OCI-LY7 (cell line): ENCODE measurements at regions of chr14 and their contacts with region 1.

Region 1: DNA sequence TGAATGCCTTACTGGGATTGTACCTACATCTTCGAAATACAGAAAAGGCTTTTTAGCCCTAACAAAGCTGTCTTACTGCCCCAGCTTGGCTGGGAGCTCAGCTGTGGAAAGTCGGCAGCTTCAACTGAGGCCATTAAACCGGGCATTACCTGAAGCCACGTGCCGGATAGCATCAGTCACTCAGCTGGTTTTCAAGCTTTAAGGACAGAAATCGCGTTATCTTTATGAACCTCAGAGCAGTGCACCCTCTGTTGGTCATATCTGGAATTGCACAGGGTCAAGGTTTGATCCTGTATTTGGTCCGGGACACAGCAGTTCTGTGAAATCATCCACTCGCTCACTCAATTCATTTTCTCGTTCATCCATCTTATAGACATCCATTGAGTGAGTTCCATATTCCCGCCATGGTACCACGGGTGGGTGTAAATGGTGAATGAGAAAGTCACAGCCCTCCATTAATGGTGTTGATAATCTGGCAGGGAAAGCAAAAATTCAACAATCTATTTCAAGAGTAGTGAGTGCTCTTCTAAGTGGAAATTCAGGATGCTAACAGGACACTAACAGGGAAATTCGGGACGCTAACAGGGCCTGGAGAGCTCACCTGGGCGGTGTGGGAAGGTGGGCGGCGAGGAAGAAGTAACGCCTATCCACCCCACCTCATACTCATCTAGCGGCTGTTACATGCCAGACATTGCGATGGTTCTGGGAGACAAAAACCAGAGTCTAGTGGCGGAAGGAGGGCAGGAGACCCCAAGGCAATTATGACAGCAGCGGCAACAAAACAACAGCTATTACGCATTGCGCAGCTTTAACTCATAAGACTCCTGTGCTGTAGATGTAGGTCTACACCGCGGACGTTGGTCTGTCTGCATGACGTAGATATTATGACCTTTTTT is 60.6 kb upstream of the TCL1A start:
- DNase-seq: peak; percentile 86
- H3K4me3 ChIP-seq: no peak overlapping the region
- H3K27ac ChIP-seq: no peak overlapping the region
- H3K4me1 ChIP-seq: peaks cover 6% of the 10 kb centered on the region
- CTCF ChIP-seq: peak; percentile 98

Region 2: DNA sequence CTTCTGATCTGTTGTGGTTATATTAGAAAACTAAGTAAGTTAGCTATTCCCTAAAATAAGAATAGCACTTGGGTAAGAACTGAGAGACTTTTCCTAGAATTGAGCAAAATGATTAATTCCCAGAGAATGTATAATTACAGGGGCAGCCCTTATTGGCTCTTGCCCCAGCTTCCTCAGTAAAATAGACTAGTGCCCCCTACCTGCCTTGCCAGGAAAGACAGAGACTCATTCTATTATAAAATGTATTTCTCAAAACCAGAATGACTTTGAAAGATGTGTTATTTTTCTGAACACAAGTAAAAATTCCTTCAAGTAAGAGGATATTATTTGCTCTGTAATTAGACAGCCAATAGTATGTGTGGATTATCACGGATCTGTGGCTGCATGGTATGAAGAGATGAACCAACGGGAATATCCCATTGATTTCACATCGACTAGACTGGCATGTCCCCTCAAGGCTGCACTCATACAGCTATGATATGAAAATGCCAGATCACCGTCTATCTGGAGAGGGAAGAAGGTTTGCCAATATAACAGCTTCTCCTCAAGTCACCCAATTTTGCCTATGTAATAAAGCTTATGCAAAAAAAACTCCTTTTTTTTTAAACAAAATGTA is 247.0 kb before region 1 on chr14:
- CTCF ChIA-PET with region 1: no interaction called
- POLR2A ChIA-PET with region 1: no interaction called
- intact Hi-C with region 1: no loop called
- DNase-seq: peak; percentile 66
- H3K4me3 ChIP-seq: no peak overlapping the region
- H3K27ac ChIP-seq: no peak overlapping the region
- H3K4me1 ChIP-seq: peaks cover 45% of the 10 kb centered on the region
- CTCF ChIP-seq: peak; percentile 98

Region 3: DNA sequence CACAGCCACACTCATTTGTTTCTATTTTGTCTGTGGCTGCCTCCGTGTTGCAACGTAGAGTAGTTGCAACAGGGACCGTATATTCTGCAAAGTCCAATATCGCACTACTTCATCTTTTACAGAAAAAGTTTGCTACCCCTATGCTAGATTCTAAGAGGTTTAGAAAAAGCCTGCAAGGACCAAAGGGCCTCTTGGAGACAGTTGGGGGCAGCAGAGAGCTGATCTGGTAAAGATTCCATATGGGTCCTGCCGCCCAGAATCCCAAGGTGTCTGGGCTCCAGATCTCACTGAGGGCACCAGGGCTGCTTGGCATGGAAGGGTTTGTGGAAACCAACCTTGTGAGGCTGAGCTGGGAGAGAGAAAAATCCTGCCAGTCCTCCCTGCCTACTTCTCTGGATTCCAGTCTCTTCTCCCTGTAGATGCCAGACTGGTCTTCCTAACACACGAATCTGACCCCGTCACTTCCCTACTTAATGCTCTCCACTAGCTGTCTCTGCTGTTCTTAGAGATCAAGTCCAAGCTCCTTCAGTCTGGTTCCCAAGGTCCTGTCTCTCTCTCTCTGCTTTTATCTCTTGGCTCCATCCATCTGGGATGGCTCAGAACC is 165.0 kb before region 1 on chr14:
- CTCF ChIA-PET with region 1: interaction called, 5 read pairs
- POLR2A ChIA-PET with region 1: no interaction called
- intact Hi-C with region 1: loop called (anchors 1 kb)
- DNase-seq: peak; percentile 81
- H3K4me3 ChIP-seq: no peak overlapping the region
- H3K27ac ChIP-seq: no peak overlapping the region
- H3K4me1 ChIP-seq: peaks cover 26% of the 10 kb centered on the region
- CTCF ChIP-seq: peak; percentile 97

Region 4: DNA sequence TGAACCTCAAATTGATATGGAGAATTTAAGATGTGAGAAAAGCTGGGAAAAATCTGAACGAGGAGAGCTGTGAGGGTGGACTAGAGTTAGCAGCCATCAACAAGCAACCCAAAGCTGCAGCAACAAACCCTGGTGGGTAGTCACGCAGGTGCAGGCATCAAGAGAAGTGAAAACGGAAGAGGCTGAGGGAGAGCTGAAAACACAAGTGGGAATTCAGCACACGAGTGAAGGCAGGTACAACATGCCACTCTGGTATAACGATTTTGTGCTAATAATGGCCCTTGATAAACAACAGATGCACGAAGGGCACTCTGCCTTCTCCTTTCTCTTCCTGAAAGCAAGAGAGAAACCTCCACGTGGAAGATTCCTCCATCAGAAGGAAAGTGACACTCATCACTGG is 76.7 kb before region 1 on chr14:
- CTCF ChIA-PET with region 1: interaction called, 3 read pairs
- POLR2A ChIA-PET with region 1: no interaction called
- intact Hi-C with region 1: loop called (anchors 5 kb)
- DNase-seq: peak; percentile 94
- H3K4me3 ChIP-seq: peak overlapping the region; percentile 49
- H3K27ac ChIP-seq: peak overlapping the region; percentile 100
- H3K4me1 ChIP-seq: peaks cover 97% of the 10 kb centered on the region
- CTCF ChIP-seq: no peak